BJ (cell line): ENCODE measurements at regions of chr9 and their contacts with region 1.

Region 1: DNA sequence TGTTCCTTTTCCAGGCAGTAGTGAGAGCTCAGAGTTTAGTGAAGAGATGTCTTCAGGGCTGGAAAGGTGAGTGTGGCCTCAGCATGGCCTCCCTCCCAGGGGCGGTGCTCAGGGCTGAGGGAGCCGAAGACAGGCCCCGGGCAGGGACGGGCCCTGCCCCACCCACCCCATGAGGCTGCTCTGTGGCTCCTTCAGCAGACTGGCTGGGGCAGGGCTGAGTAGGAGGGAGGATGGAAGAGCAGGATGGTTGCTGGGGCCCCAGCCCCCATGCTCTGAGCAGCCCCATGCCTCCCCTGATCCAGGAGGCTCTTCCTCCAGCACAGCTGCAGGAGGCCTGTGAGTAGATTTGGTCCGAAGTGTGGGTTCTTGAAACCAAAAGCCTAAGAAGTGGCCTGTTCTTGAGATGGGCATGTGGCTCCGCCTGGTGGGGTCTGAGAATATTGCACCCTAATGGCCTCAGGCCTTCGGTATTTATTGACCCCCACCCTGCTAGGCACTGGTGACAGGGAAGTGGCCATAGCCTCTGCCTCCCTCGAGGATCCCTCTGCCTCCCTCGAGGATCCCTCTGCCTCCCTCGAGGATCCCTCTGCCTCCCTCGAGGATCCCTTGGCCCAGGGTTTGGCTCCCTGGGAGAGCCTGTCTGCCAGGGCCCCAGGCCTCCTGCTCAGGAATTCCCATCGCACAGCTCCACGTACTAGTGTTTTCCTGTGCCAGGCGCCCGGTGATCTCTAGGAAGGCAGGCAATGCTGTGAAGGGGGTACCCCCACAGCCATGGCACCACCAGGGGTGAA is 65.4 kb upstream of the GARNL3 start:
- DNase-seq: no peak
- H3K4me3 ChIP-seq: no peak overlapping the region
- H3K27me3 ChIP-seq: no peaks in the 10 kb centered on the region; the same call in 1 of the 2 replicates
- CTCF ChIP-seq: peak; percentile 84

Region 2: DNA sequence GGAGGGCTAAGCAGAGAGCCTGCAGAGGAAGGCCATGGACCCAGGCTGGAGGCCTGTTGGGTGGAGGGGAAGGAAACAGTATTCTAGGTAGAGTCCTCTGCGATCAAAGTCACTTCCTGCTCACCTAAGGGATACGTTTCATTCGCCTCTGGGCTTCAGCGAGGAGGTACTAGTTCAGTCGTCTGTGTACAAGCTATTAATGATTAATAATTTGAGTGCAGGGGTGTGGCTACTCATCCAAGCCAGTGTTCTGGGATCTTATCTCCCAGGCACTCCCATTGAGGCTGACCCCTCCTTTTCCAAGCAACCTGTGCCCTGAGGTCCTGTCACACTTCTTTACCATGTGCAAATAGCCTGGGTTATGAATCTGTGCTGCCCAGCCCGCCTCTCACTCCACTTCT is 259.4 kb before region 1 on chr9:
- CTCF ChIA-PET with region 1: interaction called, 196 read pairs
- POLR2A ChIA-PET with region 1: no interaction called
- DNase-seq: no peak
- H3K4me3 ChIP-seq: no peak overlapping the region
- H3K27me3 ChIP-seq: peaks cover 1% of the 10 kb centered on the region
- CTCF ChIP-seq: no peak

Region 3: DNA sequence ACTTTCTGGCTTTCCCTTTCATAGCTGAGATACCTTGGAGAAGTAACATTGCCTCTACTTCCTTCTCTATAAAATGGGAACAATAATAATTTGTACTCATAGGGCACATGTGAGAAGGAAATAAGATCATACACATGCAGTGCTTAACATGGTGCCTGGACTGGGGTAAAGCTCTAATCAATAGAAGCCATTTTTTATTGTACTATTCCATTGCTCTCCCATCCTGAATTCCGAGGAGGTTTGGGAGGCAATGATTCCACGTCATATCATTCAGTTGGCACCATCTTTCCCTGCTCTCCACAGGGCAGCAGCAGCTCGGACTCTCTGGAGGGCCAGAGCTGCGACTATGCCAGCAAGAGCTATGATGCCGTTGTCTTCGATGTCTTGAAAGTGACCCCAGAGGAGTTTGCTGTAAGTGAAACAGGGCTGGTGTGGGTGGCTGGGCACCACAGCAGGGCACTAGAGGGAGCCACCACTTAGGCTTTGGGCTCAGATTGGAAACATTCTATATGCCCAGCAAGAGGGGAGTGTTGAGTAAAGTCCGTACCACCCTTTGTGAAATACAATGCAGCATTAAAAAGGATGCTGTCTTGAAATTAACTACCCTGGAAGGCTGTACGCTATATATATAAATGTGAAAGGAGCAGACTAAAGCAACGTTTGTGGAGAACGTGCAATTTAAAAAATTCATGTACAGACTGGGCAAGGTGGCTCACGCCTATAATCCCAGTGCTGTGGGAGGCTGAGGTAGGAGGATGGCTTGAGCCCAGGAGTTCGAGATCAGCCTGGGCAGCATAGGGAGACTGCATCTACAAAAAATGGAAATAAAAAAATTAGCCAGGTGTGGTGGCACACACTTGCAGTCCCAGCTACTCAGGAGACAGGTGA is 233.4 kb before region 1 on chr9:
- CTCF ChIA-PET with region 1: interaction called, 208 read pairs
- POLR2A ChIA-PET with region 1: no interaction called
- DNase-seq: no peak
- H3K4me3 ChIP-seq: no peak overlapping the region
- H3K27me3 ChIP-seq: no peaks in the 10 kb centered on the region; the same call in 1 of the 2 replicates
- CTCF ChIP-seq: peak; percentile 92

Region 4: GRCh38 chr9:127159325-127159801 is 39.8 kb before region 1 on chr9:
- CTCF ChIA-PET with region 1: interaction called, 14 read pairs
- POLR2A ChIA-PET with region 1: no interaction called
- DNase-seq: no peak
- H3K4me3 ChIP-seq: no peak overlapping the region
- H3K27me3 ChIP-seq: no peaks in the 10 kb centered on the region
- CTCF ChIP-seq: peak; percentile 55

Region 5: DNA sequence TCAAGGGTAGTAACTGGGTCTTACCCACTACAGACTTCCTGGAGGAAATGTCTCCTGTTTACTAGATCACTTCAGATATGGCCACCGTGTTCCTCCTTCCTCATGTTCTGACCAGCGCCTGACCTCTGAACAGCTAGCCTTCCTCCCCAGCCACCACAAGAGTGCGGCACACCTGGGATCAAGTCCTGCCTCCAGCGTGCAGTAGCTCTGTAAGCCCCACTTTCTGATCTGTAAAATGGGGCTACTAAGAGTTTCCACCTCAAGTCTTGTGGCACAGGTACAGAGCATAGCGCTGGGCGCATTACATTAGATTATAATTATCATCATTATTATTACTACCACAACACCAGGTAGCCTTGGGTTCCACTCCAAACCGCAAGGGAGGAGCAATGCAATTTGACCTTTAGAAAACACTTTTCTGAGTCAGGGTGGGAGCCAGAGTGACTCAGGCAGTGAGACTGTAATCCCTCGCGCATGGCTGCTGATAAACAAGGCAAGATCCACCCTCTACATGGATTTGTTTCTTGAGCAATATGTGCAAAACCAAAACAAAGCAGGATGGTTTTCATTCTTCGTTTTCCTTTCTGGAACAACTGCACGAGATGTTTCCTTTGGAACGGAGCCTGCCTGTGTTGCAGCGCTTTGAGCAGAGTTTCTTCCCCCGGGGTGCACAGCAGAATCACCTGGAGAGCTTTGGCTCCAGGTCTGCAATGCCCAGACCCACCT is 11.8 kb before region 1 on chr9:
- CTCF ChIA-PET with region 1: interaction called, 26 read pairs
- POLR2A ChIA-PET with region 1: interaction called, 5 read pairs
- DNase-seq: peak; percentile 96
- H3K4me3 ChIP-seq: no peak overlapping the region
- H3K27me3 ChIP-seq: 0 out of 2 replicates have a peak, but pooled peaks cover 2% of the 10 kb centered on the region
- CTCF ChIP-seq: no peak

Region 6: GRCh38 chr9:127214421-127215267 is 15.4 kb after region 1 on chr9:
- CTCF ChIA-PET with region 1: interaction called, 16 read pairs
- POLR2A ChIA-PET with region 1: no interaction called
- DNase-seq: no peak
- H3K4me3 ChIP-seq: no peak overlapping the region
- H3K27me3 ChIP-seq: peaks cover 9% of the 10 kb centered on the region
- CTCF ChIP-seq: peak; percentile 79